Colonic mucosa (tissue), 4 donors: ENCODE measurements at regions of chr17 and their contacts with region 1.

Region 1: GRCh38 chr17:76631829-76632565 is 11.6 kb downstream of the ST6GALNAC1 start:
- DNase-seq: no peak
- H3K4me3 ChIP-seq: no peak overlapping the region
- H3K27ac ChIP-seq: no peak overlapping the region
- H3K4me1 ChIP-seq: no peaks in the 10 kb centered on the region
- H3K27me3 ChIP-seq: no peaks in the 10 kb centered on the region
- CTCF ChIP-seq: no peak

Region 2: DNA sequence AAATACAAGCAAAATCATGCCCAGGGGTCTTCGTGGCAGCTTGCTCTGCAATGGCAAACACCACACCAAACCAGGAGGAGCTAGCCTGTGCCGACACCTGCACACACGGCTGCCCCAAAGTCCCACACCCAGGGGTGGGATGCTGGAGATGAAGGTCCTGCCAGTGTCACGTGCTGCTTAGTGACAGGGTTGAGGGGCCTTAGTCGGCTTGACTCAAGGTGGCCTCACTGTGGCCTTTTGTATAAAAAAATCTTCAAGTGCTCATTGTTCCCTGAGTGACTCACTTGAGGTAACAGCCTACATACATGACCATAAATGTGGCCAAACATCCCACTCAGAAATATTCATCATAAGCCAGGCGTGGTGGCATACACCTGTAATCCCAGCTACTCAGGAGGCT is 742.5 kb before region 1 on chr17:
- intact Hi-C with region 1: no loop called
- DNase-seq: no peak
- H3K4me3 ChIP-seq: no peak overlapping the region
- H3K27ac ChIP-seq: no peak overlapping the region
- H3K4me1 ChIP-seq: no peaks in the 10 kb centered on the region
- H3K27me3 ChIP-seq: no peaks in the 10 kb centered on the region
- CTCF ChIP-seq: no peak

Region 3: DNA sequence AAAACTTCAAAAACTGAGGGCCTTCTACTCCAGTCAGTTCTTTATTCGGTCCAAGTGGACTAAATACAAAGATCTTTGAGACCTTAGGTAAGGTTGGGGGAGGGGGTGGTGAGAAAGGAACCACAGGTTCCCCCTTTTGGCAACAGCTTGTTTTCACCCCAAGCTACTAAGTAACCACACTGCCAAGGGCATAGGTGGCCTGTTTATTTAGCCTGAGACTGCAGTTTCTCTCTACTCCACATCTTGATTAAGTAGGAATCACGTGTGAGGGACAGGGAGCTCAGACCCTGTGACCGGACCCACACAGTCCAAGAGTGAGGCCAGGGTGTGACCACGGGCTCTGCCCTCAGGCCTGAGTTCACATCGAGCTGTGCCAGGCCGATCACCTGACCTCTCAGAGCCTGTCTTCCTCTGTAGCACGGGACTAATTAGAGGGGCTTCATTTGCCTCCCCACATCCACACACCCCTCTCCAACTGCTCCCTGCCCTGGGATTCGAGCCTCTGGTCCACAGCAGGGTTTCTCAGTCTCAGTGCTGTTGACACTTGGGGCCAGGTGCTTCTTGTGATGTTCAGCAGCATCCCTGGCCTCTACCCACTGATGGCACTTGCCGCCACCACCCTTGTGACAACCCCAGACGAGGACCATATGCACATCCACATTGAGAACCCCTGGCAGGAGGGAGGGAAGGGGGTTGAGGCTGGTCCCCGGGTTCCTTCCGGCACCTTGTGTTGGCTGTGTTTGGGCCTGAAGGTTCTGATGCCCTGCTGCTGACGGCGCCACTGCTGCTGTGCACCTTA is 64.2 kb before region 1 on chr17:
- intact Hi-C with region 1: loop called (anchors 5 kb)
- DNase-seq: no peak
- H3K4me3 ChIP-seq: no peak overlapping the region
- H3K27ac ChIP-seq: no peak overlapping the region
- H3K4me1 ChIP-seq: no peaks in the 10 kb centered on the region
- H3K27me3 ChIP-seq: no peaks in the 10 kb centered on the region
- CTCF ChIP-seq: no peak

Region 4: GRCh38 chr17:76671123-76671911 is 39.3 kb after region 1 on chr17:
- intact Hi-C with region 1: no loop called
- DNase-seq: peak; percentile 100
- H3K4me3 ChIP-seq: peak overlapping the region; percentile 54
- H3K27ac ChIP-seq: peak overlapping the region; percentile 99
- H3K4me1 ChIP-seq: peaks cover 12% of the 10 kb centered on the region
- H3K27me3 ChIP-seq: no peaks in the 10 kb centered on the region
- CTCF ChIP-seq: no peak

Region 5: DNA sequence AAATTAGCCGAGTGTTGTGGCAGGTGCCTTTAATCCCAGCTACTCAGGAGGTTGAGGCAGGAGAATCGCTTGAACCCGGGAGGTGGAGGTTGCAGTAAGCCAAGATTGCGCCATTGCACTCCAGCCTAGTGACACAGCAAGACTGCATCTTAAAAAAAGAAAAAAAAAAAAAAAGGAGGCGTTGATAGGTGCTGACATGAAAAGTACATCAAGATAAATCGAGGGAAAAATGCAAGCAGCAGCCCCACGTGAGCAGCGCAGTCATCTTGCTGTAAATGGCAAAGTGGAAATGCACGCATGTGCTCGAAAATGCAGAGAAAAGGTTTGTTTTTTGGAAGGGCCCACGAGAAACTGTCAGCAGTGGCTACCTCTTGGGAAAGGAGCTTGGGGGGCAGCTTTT is 57.9 kb after region 1 on chr17:
- intact Hi-C with region 1: no loop called
- DNase-seq: no peak
- H3K4me3 ChIP-seq: no peak overlapping the region
- H3K27ac ChIP-seq: no peak overlapping the region
- H3K4me1 ChIP-seq: no peaks in the 10 kb centered on the region
- H3K27me3 ChIP-seq: no peaks in the 10 kb centered on the region
- CTCF ChIP-seq: no peak